ENCODE measurements at regions of chr20 and their contacts with region 1.

Region 1: DNA sequence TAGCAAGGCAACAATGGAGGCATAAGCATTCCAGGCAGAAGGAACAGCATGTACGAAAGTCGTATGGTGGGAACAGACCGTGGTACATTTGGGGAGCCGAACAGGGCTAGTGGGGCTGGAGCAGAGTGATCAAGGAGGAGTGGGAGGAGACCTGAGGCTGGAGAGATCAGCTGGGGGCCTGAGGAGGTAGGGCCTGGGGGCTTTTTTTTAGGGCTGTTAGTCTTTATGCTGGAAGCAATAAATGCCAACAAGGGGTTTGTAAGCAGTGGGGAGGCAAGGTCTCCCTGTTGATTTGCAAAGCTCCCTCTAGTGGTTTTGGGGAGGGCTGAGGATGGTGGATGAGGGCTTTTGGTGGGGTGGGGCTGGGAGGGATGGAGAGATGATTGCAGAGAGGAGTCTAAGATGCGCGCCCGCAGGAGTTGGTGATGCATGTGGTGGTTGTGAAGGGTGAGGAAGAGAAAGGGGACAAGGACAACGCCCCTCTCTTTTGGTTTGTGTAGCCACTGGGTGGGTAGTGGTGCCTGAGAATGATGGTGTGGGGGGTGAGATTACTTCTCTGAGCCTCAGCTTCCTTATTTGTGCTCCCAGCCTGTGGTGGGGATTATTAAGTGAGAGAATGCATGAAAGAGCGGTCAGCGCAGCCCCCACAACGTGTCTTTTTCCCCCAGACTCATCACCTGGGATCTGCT is 74.1 kb upstream of the TOX2 start:
- DNase-seq: peak; percentile 21 to 57
- H3K4me3 ChIP-seq: no peak overlapping the region
- H3K27ac ChIP-seq: no peak overlapping the region
- H3K4me1 ChIP-seq: peaks cover 0 to 6% (median 1%) of the 10 kb centered on the region in 4 experiments; a peak in 3 of 7 replicates
- H3K27me3 ChIP-seq: no peaks in the 10 kb centered on the region
- CTCF ChIP-seq: peak; percentile 57 to 64 (median 63)
- EP300 ChIP-seq: no peak
- POLR2A ChIP-seq: no peak
- RAD21 ChIP-seq: peak; percentile 40 to 59; a peak in 3 of 4 replicates

Region 2: DNA sequence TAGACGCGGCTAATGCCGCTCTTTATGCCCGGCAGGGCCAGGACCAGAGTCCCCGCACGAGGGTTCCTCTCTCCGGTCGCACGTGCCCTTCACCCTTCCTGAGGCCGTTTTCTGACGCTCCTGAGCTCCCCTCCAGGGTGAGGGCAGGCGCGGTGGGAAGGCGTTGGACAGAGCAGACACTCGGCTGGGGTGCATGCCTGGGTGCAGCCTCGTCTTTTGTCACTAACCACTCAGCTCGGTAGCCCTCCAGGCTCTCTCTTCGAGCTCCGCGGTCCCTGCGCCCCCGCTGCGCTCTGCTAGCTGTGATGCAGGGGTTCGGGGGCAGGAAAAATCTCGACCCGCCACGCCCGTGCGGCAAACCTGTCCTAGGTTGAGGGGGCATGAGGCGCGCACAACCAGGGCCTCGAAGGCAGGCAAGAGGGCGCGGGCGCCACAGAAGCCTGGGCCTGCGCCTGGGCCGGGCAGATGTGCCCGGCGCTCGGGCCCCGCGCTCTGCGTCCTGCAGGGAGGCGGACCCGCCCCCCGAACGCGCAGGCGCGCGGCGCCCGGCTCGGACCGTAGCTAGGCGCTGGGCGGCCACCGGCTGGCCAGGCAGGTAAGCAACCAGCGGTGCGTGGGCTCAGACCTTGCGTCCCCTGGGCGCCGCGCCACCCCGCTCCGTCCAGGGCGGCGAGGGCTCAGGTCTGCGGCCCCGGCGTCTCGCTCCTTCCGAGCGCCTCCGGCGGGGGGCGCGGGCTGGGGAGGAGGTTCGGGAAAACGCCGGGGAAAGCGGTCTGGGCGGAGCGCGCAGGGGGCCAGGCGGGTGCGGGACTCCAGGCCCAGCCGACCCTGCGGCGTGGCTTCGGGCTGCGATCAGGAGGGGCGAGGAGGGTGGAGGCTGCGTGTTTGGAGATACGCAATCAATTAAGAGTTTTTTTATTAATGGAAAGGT is 333.1 kb before region 1 on chr20 and contains the start of gene L3MBTL1:
- CTCF ChIA-PET with region 1: no interaction called
- POLR2A ChIA-PET with region 1: no interaction called
- DNase-seq: peak in 1 of 2 experiments; percentile 84
- H3K4me3 ChIP-seq: peak within 1 kb of the TSS; percentile 60 to 79 (median 62)
- H3K27ac ChIP-seq: no peak within 1 kb of the TSS
- H3K4me1 ChIP-seq: peaks cover 2 to 5% (median 5%) of the 10 kb centered on the region in 4 experiments; a peak in 6 of 7 replicates
- H3K27me3 ChIP-seq: peaks cover 4 to 18% (median 12%) of the 10 kb centered on the region in 4 experiments
- CTCF ChIP-seq: no peak
- EP300 ChIP-seq: no peak
- POLR2A ChIP-seq: peak in 1 of 2 experiments; percentile 63; a peak in 2 of 3 replicates
- RAD21 ChIP-seq: no peak
- total RNA-seq, gene L3MBTL1: 13.6 and 17.0 TPM in 2 replicates

Region 3: GRCh38 chr20:43749734-43750294 is 90.7 kb before region 1 on chr20:
- CTCF ChIA-PET with region 1: interaction called, 26 read pairs
- POLR2A ChIA-PET with region 1: no interaction called
- DNase-seq: peak; percentile 53 to 100
- H3K4me3 ChIP-seq: no peak overlapping the region
- H3K27ac ChIP-seq: no peak overlapping the region
- H3K4me1 ChIP-seq: peaks cover 0 to 4% (median 1%) of the 10 kb centered on the region in 4 experiments; a peak in 2 of 7 replicates
- H3K27me3 ChIP-seq: no peaks in the 10 kb centered on the region
- CTCF ChIP-seq: peak; percentile 94 to 97 (median 95)
- EP300 ChIP-seq: no peak
- POLR2A ChIP-seq: no peak
- RAD21 ChIP-seq: peak; percentile 96 to 98

Region 4: GRCh38 chr20:43827940-43828562 is 12.5 kb before region 1 on chr20:
- CTCF ChIA-PET with region 1: interaction called, 17 read pairs
- POLR2A ChIA-PET with region 1: no interaction called
- DNase-seq: no peak
- H3K4me3 ChIP-seq: no peak overlapping the region
- H3K27ac ChIP-seq: no peak overlapping the region
- H3K4me1 ChIP-seq: no peaks in the 10 kb centered on the region
- H3K27me3 ChIP-seq: no peaks in the 10 kb centered on the region
- CTCF ChIP-seq: no peak
- EP300 ChIP-seq: no peak
- POLR2A ChIP-seq: no peak
- RAD21 ChIP-seq: no peak

Region 5: GRCh38 chr20:43857127-43857526 is 16.6 kb after region 1 on chr20:
- CTCF ChIA-PET with region 1: interaction called, 13 read pairs
- POLR2A ChIA-PET with region 1: no interaction called
- DNase-seq: no peak
- H3K4me3 ChIP-seq: no peak overlapping the region
- H3K27ac ChIP-seq: no peak overlapping the region
- H3K4me1 ChIP-seq: no peaks in the 10 kb centered on the region
- H3K27me3 ChIP-seq: no peaks in the 10 kb centered on the region
- CTCF ChIP-seq: no peak
- EP300 ChIP-seq: no peak
- POLR2A ChIP-seq: no peak
- RAD21 ChIP-seq: no peak

Measured in H1 (cell line).